HAP-1 (cell line): ENCODE measurements at regions of chrX and their contacts with region 1.

Region 1: GRCh38 chrX:133783274-133783673 is 202.1 kb downstream of the GPC3 start:
- DNase-seq: no peak
- H3K4me3 ChIP-seq: no peak overlapping the region
- H3K4me1 ChIP-seq: peaks cover 9% of the 10 kb centered on the region
- H3K27me3 ChIP-seq: no peaks in the 10 kb centered on the region

Region 2: GRCh38 chrX:133698298-133698697 is 85.0 kb before region 1 on chrX:
- in situ Hi-C with region 1: loop called (anchors 5 kb)
- DNase-seq: peak; percentile 54 to 98
- H3K4me3 ChIP-seq: no peak overlapping the region
- H3K4me1 ChIP-seq: peaks cover 55% of the 10 kb centered on the region
- H3K27me3 ChIP-seq: no peaks in the 10 kb centered on the region

Region 3: GRCh38 chrX:134026565-134027311 is 243.5 kb after region 1 on chrX:
- in situ Hi-C with region 1: loop called (anchors 5 kb)
- DNase-seq: peak; percentile 89 to 92
- H3K4me3 ChIP-seq: no peak overlapping the region
- H3K4me1 ChIP-seq: peaks cover 28% of the 10 kb centered on the region
- H3K27me3 ChIP-seq: no peaks in the 10 kb centered on the region

Region 4: GRCh38 chrX:134144231-134144630 is 361.0 kb after region 1 on chrX:
- in situ Hi-C with region 1: loop called (anchors 10 kb)
- DNase-seq: peak; percentile 36 to 73
- H3K4me3 ChIP-seq: no peak overlapping the region
- H3K4me1 ChIP-seq: no peaks in the 10 kb centered on the region; the same call in 1 of the 2 replicates
- H3K27me3 ChIP-seq: peaks cover 10% of the 10 kb centered on the region